ENCODE measurements at regions of chrX and their contacts with region 1.

Region 1: DNA sequence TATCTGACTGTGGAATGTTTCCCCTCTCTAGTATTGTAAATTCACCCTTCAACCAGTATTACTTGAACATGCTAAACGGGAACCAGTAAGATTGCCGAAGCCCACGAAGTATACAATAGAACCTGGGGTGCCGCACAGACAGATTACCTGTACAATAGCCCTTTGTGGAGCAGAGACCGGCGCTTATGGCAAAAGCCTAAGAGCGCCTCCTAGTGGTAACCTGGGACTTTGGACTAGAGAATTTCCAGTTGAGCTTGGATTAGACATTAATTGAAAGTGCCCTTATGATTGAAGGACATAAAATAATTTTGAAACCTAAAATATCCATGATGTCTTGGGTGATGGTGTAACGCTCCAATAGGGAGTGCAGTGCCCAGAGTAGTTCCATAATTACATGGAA is 14.1 kb downstream of the ZNF157 start:
- DNase-seq: peak; percentile 52
- ATAC-seq: peak; percentile 35 to 50

Region 2: GRCh38 chrX:47144626-47145394 is 239.7 kb before region 1 on chrX and contains the starts of genes NDUFB11 and RBM10:
- intact Hi-C with region 1: no loop called
- DNase-seq: peak; percentile 94
- ATAC-seq: peak; percentile 97 to 98
- total RNA-seq, gene NDUFB11: 137 to 138 TPM
- total RNA-seq, gene RBM10: 22.1 to 23.9 TPM

Region 3: DNA sequence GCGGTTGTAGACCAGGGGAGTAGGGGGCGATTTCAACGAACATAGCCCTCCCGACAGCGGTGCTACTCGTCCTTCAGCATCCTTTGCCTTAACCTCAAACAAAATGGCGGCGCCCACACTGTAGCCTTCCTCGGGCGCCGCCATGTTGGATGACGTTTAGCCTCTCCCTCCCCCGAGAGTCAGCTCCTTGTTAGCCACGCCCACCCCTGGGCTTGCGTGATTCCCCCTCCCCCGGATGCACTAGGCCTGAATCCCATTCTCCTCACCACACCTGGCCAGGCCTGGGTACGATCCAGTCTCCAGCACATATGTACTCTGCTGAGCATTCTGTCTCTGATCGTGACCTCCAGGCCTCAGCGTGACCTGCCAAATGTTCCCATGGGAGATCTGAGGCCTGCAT is 63.1 kb before region 1 on chrX:
- intact Hi-C with region 1: no loop called
- DNase-seq: peak; percentile 73
- ATAC-seq: peak; percentile 73 to 88

Region 4: GRCh38 chrX:47501226-47502071 is 116.9 kb after region 1 on chrX:
- intact Hi-C with region 1: no loop called
- DNase-seq: no peak
- ATAC-seq: no peak

Region 5: GRCh38 chrX:47523297-47523696 is 138.8 kb after region 1 on chrX:
- intact Hi-C with region 1: loop called in 1 of 2 experiments (anchors 10 kb)
- DNase-seq: peak; percentile 85
- ATAC-seq: peak; percentile 99 to 100